ENCODE measurements at regions of chr7 and their contacts with region 1.

Region 1: GRCh38 chr7:668139-668931 is 58.2 kb upstream of the DNAAF5 start:
- DNase-seq: peak; percentile 14
- H3K4me3 ChIP-seq: no peak overlapping the region
- H3K27ac ChIP-seq: no peak overlapping the region
- H3K4me1 ChIP-seq: no peaks in the 10 kb centered on the region
- H3K27me3 ChIP-seq: no peaks in the 10 kb centered on the region
- CTCF ChIP-seq: no peak

Region 2: DNA sequence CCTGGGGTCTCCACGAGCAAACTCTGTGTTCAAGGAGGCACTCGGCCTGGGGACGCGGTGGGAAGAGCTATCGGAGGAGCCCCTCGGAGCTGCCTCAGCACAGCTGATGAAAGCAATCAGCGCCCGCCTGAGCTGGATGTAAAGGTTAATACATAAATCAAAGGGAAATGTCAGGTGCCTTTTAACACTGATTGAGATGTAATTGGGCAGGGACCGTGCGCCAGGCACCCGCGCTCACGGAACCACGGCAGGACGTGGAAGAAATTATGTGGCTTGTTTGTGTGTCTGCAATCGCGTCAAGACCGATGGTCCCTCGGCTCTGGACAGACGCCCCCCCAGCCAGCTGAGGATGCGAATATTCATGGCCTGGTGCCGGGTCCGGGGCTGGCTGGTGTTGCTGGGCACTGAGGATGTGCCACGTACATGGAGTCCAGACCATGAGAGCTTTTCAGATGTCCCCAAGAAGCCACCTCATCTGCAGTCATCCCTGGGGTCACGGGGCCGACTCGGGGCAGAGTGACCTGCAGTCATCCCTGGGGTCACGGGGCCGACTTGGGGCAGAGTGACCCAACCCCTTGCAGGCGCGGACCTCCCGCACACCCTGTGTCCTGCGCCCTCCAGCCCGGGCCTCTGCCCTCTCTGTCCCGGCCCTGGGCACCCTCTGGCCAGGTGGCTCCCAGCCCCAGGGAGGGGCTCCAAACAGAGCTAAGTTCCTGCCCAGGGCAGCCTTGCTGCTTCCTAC is 362.8 kb before region 1 on chr7:
- CTCF ChIA-PET with region 1: no interaction called
- dilution Hi-C with region 1: loop called (anchors 5 kb)
- in situ Hi-C with region 1: no loop called
- intact Hi-C with region 1: no loop called
- DNase-seq: no peak
- H3K4me3 ChIP-seq: no peak overlapping the region
- H3K27ac ChIP-seq: no peak overlapping the region
- H3K4me1 ChIP-seq: no peaks in the 10 kb centered on the region
- H3K27me3 ChIP-seq: no peaks in the 10 kb centered on the region
- CTCF ChIP-seq: no peak

Region 3: GRCh38 chr7:561631-562373 is 106.5 kb before region 1 on chr7:
- CTCF ChIA-PET with region 1: no interaction called
- dilution Hi-C with region 1: loop called (anchors 5 kb)
- in situ Hi-C with region 1: no loop called
- intact Hi-C with region 1: no loop called
- DNase-seq: no peak
- H3K4me3 ChIP-seq: no peak overlapping the region
- H3K27ac ChIP-seq: no peak overlapping the region
- H3K4me1 ChIP-seq: no peaks in the 10 kb centered on the region
- H3K27me3 ChIP-seq: no peaks in the 10 kb centered on the region
- CTCF ChIP-seq: no peak

Region 4: DNA sequence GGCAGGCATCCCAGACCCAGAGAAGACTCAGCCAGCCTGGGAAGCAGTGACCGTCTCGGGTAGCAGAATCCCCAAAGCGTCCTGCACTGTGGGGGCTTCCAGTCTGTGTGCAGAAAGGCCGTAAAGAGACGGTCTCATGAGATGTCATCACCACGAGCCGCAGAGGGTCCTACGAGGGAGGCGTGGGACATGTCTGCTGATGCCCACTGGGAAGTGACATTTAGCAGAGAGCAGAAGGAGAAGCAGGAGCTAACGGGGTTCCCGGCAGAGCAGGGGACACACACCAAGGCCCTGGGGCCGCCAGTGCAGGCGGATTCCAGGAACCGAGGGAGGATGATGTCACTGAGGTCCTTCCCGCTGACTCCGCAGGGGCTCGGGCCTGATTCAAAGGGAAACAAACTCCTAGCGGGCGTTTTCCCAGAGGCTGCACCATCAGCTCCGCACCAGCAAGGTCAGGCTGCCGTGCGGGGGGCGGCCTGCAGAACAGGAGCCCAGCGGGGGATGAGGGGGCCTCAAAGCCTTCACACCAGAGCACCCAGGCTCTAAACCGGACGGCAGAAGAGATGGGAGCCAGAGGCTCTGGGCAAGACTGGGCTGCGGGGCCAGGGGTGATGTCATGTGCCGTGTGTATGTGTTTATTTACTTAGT is 63.3 kb before region 1 on chr7:
- CTCF ChIA-PET with region 1: no interaction called
- dilution Hi-C with region 1: loop called (anchors 5 kb)
- in situ Hi-C with region 1: no loop called
- intact Hi-C with region 1: no loop called
- DNase-seq: no peak
- H3K4me3 ChIP-seq: no peak overlapping the region
- H3K27ac ChIP-seq: no peak overlapping the region
- H3K4me1 ChIP-seq: peaks cover 3% of the 10 kb centered on the region
- H3K27me3 ChIP-seq: no peaks in the 10 kb centered on the region
- CTCF ChIP-seq: no peak

Region 5: DNA sequence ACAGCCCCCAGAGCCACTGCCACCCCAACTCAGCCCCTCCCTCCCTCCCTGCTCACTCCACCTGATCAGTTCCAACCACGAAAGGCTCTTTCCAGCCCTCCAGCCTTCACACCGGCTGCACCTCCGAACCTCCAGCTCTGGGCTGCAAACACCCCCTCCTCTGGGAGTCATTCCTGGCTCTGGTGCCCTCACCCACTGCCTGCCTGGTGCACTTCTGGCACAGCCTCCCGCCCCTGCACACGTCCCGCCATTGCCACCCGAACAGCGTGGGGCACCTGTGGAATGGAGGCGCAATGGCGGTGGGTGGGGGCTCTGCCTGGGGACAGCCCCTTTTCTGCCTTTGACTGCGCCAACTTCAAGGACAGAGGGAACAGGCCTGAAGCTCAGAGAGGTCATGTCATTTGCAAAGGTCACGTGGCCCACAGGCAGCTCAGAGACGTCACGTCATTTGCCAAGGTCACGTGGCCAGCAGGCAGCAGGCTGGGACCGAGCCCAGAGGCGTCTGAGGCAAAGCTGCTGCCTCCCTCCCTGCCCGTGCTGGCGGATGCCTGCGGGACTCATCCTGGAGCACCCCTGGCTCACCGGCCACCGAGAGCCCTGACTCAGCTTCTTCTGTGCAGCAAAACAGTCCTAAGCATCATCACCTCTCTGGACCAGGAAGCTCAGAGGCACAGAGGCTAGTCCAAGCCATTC is 17.9 kb before region 1 on chr7:
- CTCF ChIA-PET with region 1: no interaction called
- dilution Hi-C with region 1: no loop called
- in situ Hi-C with region 1: no loop called
- intact Hi-C with region 1: no loop called
- DNase-seq: no peak
- H3K4me3 ChIP-seq: no peak overlapping the region
- H3K27ac ChIP-seq: no peak overlapping the region
- H3K4me1 ChIP-seq: no peaks in the 10 kb centered on the region
- H3K27me3 ChIP-seq: no peaks in the 10 kb centered on the region
- CTCF ChIP-seq: no peak

Region 6: DNA sequence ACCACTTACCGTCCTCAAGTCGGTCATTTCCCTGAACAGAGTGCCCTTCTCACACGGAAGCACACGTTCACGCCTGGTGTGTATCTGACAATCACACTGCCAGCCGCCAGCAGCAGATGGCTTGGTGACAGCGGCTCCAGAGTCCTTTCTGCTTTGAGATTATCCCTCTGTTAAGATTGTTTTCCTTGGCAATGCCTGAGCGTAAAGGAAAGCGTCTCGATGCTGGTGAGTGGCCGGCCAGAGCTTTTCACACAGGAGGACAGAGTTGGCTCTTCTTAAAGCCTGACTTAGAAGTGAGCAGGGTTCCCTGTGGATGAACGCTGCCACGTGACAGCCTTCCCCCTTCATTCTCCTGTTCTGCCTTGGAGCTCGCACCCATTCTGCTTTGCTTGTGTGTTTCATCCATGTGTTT is 80.8 kb after region 1 on chr7:
- CTCF ChIA-PET with region 1: no interaction called
- dilution Hi-C with region 1: loop called (anchors 5 kb)
- in situ Hi-C with region 1: no loop called
- intact Hi-C with region 1: no loop called
- DNase-seq: no peak
- H3K4me3 ChIP-seq: no peak overlapping the region
- H3K27ac ChIP-seq: no peak overlapping the region
- H3K4me1 ChIP-seq: no peaks in the 10 kb centered on the region
- H3K27me3 ChIP-seq: no peaks in the 10 kb centered on the region
- CTCF ChIP-seq: no peak

Region 7: GRCh38 chr7:1247527-1248059 is 579.3 kb after region 1 on chr7:
- CTCF ChIA-PET with region 1: no interaction called
- dilution Hi-C with region 1: no loop called
- in situ Hi-C with region 1: no loop called
- intact Hi-C with region 1: no loop called
- DNase-seq: no peak
- H3K4me3 ChIP-seq: no peak overlapping the region
- H3K27ac ChIP-seq: no peak overlapping the region
- H3K4me1 ChIP-seq: no peaks in the 10 kb centered on the region
- H3K27me3 ChIP-seq: peaks cover 72% of the 10 kb centered on the region
- CTCF ChIP-seq: no peak